Gastrocnemius medialis (tissue), 4 donors: ENCODE measurements at regions of chr2 and their contacts with region 1.

Region 1: DNA sequence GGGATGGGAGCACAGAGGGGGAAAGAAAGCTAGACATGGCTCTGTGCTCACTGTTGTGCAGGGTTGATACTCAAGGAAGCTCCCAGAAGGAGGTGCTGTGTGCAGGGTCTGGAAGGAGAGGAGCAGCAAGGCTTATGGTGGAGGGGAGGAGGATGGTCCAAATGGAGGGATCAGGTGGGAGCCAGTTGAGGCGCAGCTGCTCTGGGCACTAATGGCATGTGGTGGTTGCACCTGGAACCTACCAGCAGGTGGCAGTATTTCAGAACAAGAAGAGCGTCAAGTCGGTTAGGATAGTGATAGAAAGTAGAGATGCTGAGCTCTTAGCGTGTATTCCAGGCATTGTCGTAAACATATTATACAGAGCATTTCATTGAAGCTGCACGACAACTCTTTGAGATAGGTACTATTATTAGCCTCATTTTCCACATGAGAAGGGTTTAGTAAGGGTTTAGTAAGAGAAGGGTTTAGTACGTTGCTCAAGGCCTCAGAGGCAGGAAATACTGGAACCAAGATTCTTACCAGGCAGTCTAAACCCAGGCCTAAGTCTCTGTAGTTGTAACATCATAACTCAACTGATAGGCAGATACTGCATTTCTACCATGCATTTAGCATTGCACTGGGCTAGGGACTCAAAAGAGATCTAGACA is 223.7 kb downstream of the CYP26B1 start:
- DNase-seq: peak; percentile 42 to 70
- ATAC-seq: peak; percentile 90 to 95
- H3K4me3 ChIP-seq: no peak overlapping the region
- H3K27ac ChIP-seq: no peak overlapping the region
- H3K4me1 ChIP-seq: no peaks in the 10 kb centered on the region
- H3K27me3 ChIP-seq: no peaks in the 10 kb centered on the region
- CTCF ChIP-seq: peak; percentile 72 to 94 (median 90)
- POLR2A ChIP-seq: no peak

Region 2: GRCh38 chr2:71545572-71546274 is 378.3 kb before region 1 on chr2:
- in situ Hi-C with region 1: no loop called
- intact Hi-C with region 1: loop called (anchors 10 kb)
- DNase-seq: peak in 1 of 2 donors; percentile 44
- ATAC-seq: peak; percentile 46 to 60
- H3K4me3 ChIP-seq: peak overlapping the region in 1 of 4 donors; percentile 30
- H3K27ac ChIP-seq: peak overlapping the region in 3 of 4 donors; percentile 46 to 69 (median 69)
- H3K4me1 ChIP-seq: no peaks in the 10 kb centered on the region
- H3K27me3 ChIP-seq: no peaks in the 10 kb centered on the region
- CTCF ChIP-seq: peak; percentile 46 to 74 (median 64)
- POLR2A ChIP-seq: no peak

Region 3: DNA sequence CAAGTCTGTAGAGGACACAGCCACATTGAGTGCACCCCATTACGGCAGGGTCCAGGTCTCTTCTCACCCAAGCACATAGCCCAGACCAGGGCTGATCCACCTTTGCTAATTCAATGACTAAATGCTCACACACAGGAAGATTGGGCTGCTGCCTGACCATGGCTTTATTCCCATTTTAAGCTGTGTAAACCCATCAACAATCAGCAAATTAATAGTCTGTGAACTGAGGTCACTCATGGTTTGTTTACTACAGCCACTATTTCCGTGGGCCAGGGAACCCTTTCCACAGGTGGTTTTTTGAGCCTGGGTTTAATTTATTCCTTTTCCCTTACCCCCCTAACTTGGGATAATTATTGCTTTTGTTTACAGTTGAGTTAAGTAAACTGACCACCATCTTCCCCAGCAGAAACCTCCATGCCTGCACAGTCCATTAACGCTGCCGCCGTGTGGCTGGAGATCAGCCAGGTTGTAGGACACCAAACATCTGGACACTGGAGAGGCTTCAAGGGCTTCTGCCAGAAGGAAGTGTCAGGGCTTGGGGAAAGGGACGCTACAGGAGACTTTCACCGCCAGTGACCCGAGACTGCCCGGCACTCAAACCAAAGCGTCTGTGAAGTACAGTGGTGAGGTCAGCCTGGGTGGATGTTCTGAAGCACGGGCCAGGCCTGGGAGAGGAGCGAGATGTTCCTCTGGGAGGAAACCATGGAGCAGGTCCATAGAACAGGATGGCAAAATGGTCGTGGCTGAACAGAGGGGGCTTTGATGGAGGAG is 187.7 kb before region 1 on chr2:
- in situ Hi-C with region 1: no loop called
- intact Hi-C with region 1: no loop called
- DNase-seq: peak in 1 of 2 donors; percentile 56
- ATAC-seq: peak; percentile 69 to 71
- H3K4me3 ChIP-seq: no peak overlapping the region
- H3K27ac ChIP-seq: no peak overlapping the region
- H3K4me1 ChIP-seq: peaks cover 4 to 13% of the 10 kb centered on the region in 2 donors
- H3K27me3 ChIP-seq: no peaks in the 10 kb centered on the region
- CTCF ChIP-seq: no peak
- POLR2A ChIP-seq: no peak

Region 4: DNA sequence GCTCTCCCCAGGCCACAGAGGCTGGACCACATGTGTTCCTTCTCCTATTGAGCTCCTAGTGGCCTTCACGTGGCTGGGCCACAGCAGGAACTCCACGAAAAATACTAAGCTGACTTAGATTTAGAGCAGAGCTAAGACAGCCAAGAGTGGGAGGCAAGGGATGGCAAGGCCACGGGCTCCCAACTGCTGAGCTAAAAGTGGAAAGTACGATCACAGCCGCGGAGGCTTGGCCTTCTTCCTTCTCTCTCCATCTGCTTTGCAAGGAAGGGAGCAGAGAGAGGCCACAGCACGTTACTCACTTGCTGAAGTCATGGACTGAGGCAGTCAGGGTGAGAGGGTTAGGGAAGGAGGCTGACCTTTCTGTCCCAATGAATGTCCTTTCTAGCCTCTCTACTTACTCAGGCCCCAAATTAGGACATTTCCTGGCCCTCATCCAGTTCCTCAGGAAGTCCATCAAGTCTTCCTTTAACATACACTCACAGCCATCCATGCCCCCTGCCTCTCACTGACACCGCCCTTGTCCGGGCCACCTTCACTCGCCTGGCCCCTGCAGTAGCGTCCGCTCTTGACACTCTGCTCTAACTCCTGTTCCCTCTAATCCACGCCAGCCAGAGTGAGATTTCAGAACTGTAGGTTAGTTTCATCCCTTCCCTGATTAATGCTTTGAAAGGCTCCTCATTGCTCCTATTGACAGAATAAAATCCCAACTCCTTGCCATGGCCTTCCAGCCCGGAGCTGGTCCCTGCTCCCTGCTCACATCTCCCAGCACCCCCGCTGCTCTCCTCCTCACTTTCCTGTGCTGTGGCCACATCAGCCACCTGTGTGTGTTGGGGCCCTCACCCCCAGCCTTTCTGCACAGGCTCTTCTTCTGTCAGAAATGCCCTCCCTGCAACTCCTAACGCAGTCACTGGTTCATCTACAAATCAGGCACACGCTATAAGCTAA is 19.5 kb after region 1 on chr2:
- in situ Hi-C with region 1: no loop called
- intact Hi-C with region 1: loop called (anchors 1 kb)
- DNase-seq: peak; percentile 38 to 64
- ATAC-seq: peak; percentile 9 to 16
- H3K4me3 ChIP-seq: no peak overlapping the region
- H3K27ac ChIP-seq: peak overlapping the region; percentile 49 to 92 (median 74)
- H3K4me1 ChIP-seq: peaks cover 41 to 49% of the 10 kb centered on the region in 2 donors
- H3K27me3 ChIP-seq: no peaks in the 10 kb centered on the region
- CTCF ChIP-seq: no peak
- POLR2A ChIP-seq: no peak

Region 5: DNA sequence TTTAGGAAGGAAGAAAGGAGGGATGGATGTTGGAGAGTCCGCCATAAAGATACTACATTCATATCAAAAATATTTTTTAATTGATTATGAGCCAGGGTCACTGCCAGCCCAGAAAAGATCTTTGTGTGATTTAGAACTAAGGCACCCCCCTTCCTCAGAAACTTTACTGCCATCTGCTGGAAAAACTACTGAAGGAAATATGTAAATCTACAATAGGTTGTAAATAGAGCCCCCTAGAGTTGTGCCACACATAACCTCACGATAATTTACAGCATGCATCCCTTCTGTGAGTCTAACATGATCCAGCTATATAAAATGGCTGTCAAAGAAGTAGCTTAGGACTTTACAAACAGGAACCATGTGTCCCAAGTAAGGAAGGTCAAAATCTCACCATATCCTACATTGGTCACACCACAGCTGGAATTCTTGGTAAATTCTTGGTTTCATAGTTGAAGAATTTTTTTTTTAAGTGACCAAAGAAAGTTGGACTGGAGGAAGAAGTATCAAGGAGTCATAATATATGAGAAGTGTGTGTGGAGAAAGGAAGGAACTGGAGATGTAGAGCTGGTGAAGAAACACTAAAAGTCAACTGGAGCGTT is 71.2 kb after region 1 on chr2:
- in situ Hi-C with region 1: loop called (anchors 5 to 10 kb)
- intact Hi-C with region 1: loop called (anchors 1 kb)
- DNase-seq: no peak
- ATAC-seq: peak; percentile 23 to 82
- H3K4me3 ChIP-seq: no peak overlapping the region
- H3K27ac ChIP-seq: no peak overlapping the region
- H3K4me1 ChIP-seq: no peaks in the 10 kb centered on the region
- H3K27me3 ChIP-seq: no peaks in the 10 kb centered on the region
- CTCF ChIP-seq: peak; percentile 63 to 79 (median 69)
- POLR2A ChIP-seq: no peak

Region 6: DNA sequence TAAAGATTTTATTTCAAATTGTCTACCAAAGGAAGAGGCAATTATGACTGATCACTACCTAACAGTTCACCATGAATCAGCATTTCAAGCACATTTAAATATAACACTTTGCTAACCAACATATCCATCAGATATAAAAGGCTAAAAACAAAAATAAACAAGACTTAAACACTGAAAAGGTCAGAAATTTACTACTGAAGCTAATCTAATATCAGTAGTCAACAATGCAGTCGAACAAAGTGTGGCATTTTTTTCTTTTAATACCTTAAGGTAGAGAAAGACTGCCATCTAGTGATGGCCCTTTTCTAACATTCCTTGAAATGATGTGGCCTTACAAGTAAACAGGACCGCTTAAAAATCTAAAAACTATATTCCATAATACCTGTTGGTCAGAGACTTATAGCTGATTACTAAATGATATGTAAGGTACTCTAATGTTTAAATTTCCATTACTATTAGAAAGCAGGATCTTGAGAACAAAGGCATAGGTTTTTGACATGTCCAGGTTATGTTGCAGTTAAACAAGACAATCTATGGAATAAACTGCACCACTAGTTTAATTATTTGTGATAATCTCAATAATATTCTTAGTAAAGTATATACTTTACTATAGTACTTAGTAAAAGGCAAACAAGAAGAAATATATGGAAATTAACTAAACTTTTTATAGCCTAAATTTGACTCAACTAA is 821.8 kb after region 1 on chr2:
- in situ Hi-C with region 1: loop called in 2 of 4 experiments (anchors 25 kb)
- intact Hi-C with region 1: no loop called
- DNase-seq: no peak
- ATAC-seq: peak; percentile 68 to 78
- H3K4me3 ChIP-seq: peak overlapping the region in 2 of 4 donors; percentile 1 to 19
- H3K27ac ChIP-seq: no peak overlapping the region
- H3K4me1 ChIP-seq: peaks cover 0 to 10% of the 10 kb centered on the region in 2 donors
- H3K27me3 ChIP-seq: no peaks in the 10 kb centered on the region
- CTCF ChIP-seq: peak; percentile 20 to 79 (median 69)
- POLR2A ChIP-seq: no peak